Activated T-helper 2 cell treated with anti-CD3 and anti-CD28 coated beads, Interferon-gamma antibody, Interleukin-2, Interleukin-4, amounts not matched to agents 10 μg/mL and 5 μg/mL and 100 μg/mL, durations not matched to agents 14 hours and 24 hours and 36 hours (primary cell): ENCODE measurements at regions of chr2 and their contacts with region 1.

Region 1: DNA sequence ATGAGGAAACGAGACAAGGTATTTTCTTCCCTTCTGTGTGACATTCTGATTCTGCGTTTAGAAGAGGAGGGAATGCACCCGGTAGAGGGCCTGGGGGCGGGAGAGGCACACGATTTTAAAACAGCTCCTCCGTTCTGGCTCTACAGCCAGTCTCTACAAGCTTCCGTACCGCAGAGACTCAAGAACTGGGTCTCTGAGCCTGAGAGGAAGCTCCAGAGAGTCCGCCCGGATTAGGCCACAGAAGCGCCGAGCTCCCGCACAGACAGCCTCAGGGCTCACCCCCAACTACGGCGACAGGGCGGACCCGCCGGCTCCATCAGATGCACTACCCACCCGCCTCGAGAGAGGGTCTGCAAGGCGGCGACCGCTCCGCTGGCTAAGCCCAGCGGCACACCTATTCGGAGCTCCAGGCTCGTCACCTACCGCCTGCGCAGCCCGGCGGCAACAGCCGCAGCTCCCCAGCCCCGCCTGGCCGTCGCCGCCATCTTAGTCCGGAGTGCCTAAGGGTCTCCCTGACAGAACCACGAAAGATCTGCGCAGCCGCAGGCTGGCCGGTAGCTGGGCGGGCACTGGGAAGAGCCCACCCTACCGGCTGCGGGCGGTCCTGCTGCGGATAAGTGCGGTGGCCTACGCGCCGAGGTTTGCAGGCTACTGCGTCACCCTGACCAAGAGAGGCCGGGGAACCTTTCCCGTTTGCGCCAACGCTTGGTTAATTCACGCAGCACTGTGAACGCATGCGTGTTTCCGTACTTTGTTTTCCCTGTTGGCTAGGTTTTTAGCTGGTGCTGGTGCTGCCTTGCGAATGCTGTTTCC is at the start of gene NFU1:
- DNase-seq: peak; percentile 82
- H3K4me3 Mint-ChIP-seq: peak within 1 kb of the TSS; percentile 86
- H3K27ac Mint-ChIP-seq: peak within 1 kb of the TSS; percentile 96
- H3K4me1 Mint-ChIP-seq: peaks cover 24% of the 10 kb centered on the region
- H3K27me3 Mint-ChIP-seq: no peaks in the 10 kb centered on the region
- total RNA-seq, gene NFU1: 54.3 and 57.9 TPM in 2 replicates

Region 2: GRCh38 chr2:68987021-68987503 is 450.1 kb before region 1 on chr2:
- intact Hi-C with region 1: no loop called
- DNase-seq: no peak
- H3K4me3 Mint-ChIP-seq: no peak overlapping the region
- H3K27ac Mint-ChIP-seq: no peak overlapping the region
- H3K4me1 Mint-ChIP-seq: no peaks in the 10 kb centered on the region
- H3K27me3 Mint-ChIP-seq: peaks cover 22% of the 10 kb centered on the region

Region 3: GRCh38 chr2:69026026-69026425 is 411.1 kb before region 1 on chr2:
- intact Hi-C with region 1: no loop called
- DNase-seq: no peak
- H3K4me3 Mint-ChIP-seq: no peak overlapping the region
- H3K27ac Mint-ChIP-seq: no peak overlapping the region
- H3K4me1 Mint-ChIP-seq: no peaks in the 10 kb centered on the region
- H3K27me3 Mint-ChIP-seq: peaks cover 25% of the 10 kb centered on the region

Region 4: DNA sequence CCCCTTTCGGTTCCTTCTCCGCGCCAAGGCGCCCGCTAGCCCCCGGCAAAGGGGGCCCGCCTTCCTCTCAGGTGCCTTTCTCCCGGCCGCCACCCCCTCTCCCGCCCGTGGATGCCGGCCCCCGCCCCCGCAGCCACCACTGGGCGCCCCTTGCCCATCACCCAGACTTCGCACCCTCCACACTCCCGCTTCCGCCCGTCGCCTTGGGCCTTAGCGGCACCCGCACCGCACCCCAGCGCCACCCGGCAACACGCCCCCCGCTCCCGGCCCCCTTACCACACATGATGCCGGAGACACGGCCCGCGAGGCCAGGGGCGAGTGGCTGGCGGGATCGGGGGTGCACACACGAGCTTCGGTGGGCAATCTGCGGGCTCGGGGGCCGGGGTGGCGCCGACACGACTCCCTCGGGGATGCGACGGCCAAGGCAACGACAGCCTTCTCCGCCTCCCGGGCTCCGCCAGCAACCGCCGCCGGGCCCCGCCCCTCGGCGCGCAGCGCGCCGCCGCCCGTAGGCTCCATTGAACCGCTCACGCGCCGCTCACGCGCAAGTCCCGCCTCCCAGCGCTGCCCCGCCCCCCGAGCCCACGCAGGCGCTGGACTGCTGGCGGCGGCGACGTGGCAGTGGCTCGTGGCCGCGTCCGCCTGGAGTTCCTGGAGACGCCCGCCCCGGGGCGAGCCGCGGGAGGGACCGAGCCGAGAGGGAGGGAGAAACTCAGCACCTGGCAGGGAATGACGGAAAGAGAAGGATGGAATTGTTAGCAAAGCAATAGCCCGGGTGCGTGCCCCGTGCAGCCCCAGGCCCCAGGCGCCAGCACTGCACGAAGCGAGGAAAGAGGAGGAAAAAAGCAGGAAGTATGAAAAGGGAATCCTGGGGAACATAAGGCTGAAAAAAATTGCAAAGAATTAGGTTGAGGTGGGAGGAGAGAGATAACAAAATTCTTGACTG is 50.1 kb before region 1 on chr2 and contains the start of gene GFPT1:
- intact Hi-C with region 1: loop called (anchors 2 kb)
- DNase-seq: peak; percentile 92
- H3K4me3 Mint-ChIP-seq: peak within 1 kb of the TSS; percentile 88
- H3K27ac Mint-ChIP-seq: peak within 1 kb of the TSS; percentile 92
- H3K4me1 Mint-ChIP-seq: peaks cover 41% of the 10 kb centered on the region
- H3K27me3 Mint-ChIP-seq: no peaks in the 10 kb centered on the region
- total RNA-seq, gene GFPT1: 55.7 and 56.6 TPM in 2 replicates

Region 5: GRCh38 chr2:69453475-69454129 is 16.5 kb after region 1 on chr2:
- intact Hi-C with region 1: loop called (anchors 1 kb)
- DNase-seq: no peak
- H3K4me3 Mint-ChIP-seq: no peak overlapping the region
- H3K27ac Mint-ChIP-seq: peak overlapping the region; percentile 11
- H3K4me1 Mint-ChIP-seq: peaks cover 13% of the 10 kb centered on the region
- H3K27me3 Mint-ChIP-seq: no peaks in the 10 kb centered on the region

Region 6: DNA sequence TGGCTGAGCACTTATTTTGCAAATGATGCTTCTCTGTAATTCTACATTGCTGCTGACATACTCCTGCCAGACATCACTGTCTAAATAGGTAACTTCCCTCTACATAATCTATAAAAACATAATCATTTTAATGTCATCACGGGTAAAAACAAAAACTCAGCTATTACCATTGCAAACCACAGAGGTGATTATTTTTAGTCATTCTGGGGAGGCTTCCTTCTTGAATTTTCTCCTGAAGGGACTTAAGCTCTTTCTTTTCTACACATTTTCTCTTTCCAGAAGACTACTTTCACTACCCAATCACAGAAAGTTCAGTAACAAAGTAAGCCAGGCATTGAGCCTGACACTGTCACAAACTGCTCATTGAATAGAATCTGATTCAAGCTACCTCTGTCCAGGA is 40.5 kb after region 1 on chr2:
- intact Hi-C with region 1: loop called (anchors 5 kb)
- DNase-seq: no peak
- H3K4me3 Mint-ChIP-seq: no peak overlapping the region
- H3K27ac Mint-ChIP-seq: peak overlapping the region; percentile 66
- H3K4me1 Mint-ChIP-seq: peaks cover 39% of the 10 kb centered on the region
- H3K27me3 Mint-ChIP-seq: no peaks in the 10 kb centered on the region

Region 7: DNA sequence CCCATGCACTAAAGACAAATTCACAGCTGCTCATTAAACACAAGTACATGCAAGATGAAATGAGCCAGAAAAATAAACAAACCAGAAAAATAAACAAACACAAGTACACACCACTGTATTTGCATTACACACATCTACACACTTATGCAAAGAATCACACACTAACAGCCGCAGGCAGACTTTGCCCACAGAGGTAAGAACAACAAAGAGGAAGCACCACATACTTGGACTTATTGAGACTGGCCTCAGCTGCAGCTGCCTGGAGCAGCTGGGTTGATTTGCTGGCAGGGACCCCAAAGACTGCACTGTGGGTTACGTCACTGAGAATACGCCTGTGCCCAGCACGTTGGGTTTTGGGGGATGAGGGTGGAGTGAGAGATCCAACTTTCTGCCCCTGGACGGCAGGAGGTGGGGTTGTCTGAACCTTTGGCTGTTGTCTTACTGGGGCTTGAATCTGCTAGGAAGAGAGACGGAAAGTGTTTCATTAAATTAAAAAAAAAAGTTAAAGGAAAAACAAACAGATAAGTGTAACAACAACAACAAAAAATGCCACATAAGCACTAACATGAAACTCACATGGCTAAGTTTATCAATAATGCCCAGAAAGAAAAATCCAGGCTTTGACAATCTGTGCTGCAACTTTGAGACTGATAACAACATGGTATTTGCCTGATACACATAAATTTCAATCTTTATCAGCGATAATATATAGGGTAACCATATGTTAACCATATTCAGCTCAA is 72.0 kb after region 1 on chr2:
- intact Hi-C with region 1: loop called (anchors 5 kb)
- DNase-seq: no peak
- H3K4me3 Mint-ChIP-seq: no peak overlapping the region
- H3K27ac Mint-ChIP-seq: peak overlapping the region; percentile 86
- H3K4me1 Mint-ChIP-seq: peaks cover 36% of the 10 kb centered on the region
- H3K27me3 Mint-ChIP-seq: no peaks in the 10 kb centered on the region

Region 8: DNA sequence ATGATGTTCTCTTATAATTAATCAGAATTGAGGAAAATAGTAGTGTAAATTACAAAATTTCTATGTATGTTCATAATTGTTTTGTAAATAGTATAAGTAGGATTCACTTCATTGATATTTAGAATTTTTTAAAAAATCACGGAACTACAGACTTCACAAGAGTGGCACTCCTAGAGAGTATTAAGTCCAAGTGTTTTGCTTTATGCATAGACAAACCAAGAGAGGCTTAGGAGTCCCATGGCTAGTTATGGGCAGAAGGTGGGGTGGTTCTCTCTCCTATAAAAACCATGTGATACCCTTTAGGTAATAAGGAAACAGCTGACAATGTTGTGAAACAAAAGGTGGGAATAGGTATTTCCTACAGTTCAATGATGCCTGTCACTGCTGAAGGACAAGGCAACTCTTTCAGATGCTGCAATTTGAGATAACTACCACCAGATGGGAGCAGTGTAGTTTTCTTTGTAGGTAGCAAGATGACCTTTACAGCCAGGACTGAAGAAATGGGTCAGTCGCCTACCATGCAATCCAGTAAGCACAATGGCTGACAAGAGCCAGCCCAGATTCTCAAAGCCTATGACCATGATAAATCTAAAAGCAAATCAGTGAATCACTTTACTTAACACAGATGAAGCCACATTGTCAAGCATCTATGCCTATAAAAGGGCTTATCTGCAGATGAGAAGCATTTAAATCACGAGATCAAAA is 122.5 kb after region 1 on chr2:
- intact Hi-C with region 1: loop called (anchors 5 kb)
- DNase-seq: no peak
- H3K4me3 Mint-ChIP-seq: peak overlapping the region; percentile 7
- H3K27ac Mint-ChIP-seq: peak overlapping the region; percentile 52
- H3K4me1 Mint-ChIP-seq: peaks cover 67% of the 10 kb centered on the region
- H3K27me3 Mint-ChIP-seq: no peaks in the 10 kb centered on the region

Region 9: GRCh38 chr2:69829256-69830046 is 392.3 kb after region 1 on chr2 and contains the start of gene GMCL1:
- intact Hi-C with region 1: loop called (anchors 5 kb)
- DNase-seq: peak; percentile 99
- H3K4me3 Mint-ChIP-seq: peak within 1 kb of the TSS; percentile 84
- H3K27ac Mint-ChIP-seq: peak within 1 kb of the TSS; percentile 93
- H3K4me1 Mint-ChIP-seq: peaks cover 42% of the 10 kb centered on the region
- H3K27me3 Mint-ChIP-seq: no peaks in the 10 kb centered on the region
- total RNA-seq, gene GMCL1: 29.2 and 29.3 TPM in 2 replicates